IMR-90 (cell line): ENCODE measurements at regions of chr17 and their contacts with region 1.

Region 1: DNA sequence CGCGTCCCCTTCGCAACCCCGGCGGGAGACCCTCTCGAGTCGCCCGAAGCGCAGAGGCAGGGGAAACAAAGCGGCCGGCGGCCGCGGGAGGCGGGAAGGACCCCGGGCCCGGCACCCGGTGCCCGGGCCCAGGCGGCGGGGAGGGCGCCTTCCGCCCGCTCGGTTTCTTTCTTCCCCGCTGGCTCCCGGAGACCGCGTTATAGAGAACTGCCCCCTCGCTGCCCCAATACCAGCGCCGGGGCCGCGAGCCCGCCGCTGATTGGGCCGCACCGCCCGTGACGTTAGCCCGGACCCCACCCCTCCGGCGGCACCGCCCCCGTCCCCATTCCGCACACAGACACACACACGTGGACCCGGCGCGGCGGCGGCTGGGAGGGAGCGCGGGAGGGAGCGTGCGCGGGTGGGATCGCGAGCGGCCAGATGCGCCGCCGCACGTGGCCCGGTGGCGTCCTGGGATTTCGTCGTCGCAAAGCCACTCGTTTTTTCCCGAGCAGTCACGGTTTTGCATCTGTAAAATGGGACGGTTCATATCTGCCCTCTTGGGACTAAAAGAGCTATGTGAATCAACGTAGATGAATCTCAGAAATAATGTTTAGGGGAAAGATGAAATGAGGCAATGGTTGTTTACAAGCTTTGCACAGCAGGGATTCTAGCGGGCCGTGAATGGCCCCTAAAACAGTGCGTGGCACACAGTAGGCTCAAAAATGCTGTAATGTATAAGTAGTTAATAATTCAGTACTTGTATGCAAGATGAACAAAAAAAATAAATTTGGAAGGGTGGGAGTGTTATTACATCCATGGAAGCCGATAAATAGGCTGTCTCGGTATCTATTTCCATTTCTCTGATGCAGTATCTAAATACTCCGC is at the start of gene EPOP:
- DNase-seq: peak; percentile 76
- ATAC-seq: peak; percentile 93
- H3K4me3 ChIP-seq: peak within 1 kb of the TSS; percentile 52
- H3K27ac ChIP-seq: no peak within 1 kb of the TSS
- H3K4me1 ChIP-seq: no peaks in the 10 kb centered on the region
- H3K27me3 ChIP-seq: peaks cover 45% of the 10 kb centered on the region
- CTCF ChIP-seq: no peak
- POLR2A ChIP-seq: 0 out of 2 replicates have a peak, but pooled peaks have one; percentile 55
- RAD21 ChIP-seq: no peak
- total RNA-seq, gene EPOP: 0.28 and 0.36 TPM in 2 replicates

Region 2: DNA sequence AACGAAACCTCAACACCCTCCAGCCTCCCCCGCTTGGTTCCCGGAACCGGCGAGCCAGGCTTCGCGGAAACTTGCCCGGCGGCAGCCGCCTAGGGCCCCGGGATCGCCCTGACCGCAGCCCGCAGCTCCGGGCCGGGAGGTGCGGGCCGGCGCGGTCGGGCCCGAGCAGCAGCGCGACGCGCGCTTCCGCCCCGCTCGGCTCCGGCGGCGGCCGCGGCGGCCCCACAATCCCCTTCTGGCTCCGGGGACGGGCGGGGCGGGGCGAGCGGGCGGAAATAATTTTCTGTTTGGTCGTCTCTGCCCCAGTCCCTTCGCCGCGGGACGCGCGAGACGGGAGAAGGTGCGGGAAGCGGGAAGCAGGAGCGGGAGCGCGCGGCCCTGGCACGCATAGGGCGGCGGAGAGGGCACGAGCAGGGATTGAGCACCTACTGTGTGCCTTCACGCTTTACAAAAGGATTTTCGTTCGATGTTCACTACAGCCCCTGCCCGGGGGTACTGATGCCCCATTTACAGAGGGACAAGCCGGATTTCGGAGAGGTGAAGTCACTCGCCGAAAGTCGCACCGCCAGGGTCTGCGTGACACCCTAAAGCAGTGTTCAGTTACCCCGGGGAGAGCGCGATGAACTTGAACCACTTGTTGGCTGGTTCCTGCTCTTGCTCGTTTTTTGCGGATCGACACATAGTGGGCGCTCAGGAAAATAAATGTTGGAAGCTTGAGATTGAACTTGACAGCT is 27.4 kb after region 1 on chr17:
- CTCF ChIA-PET with region 1: interaction called, 3 read pairs
- POLR2A ChIA-PET with region 1: interaction called, 3 read pairs
- dilution Hi-C with region 1: no loop called
- in situ Hi-C with region 1: no loop called
- intact Hi-C with region 1: loop called (anchors 1 kb)
- DNase-seq: peak; percentile 81
- ATAC-seq: peak; percentile 72
- H3K4me3 ChIP-seq: peak overlapping the region; percentile 95
- H3K27ac ChIP-seq: peak overlapping the region; percentile 83
- H3K4me1 ChIP-seq: peaks cover 17% of the 10 kb centered on the region
- H3K27me3 ChIP-seq: no peaks in the 10 kb centered on the region
- CTCF ChIP-seq: no peak
- POLR2A ChIP-seq: 0 out of 2 replicates have a peak, but pooled peaks have one; percentile 28
- RAD21 ChIP-seq: no peak

Region 3: GRCh38 chr17:38729886-38730525 is 55.0 kb after region 1 on chr17 and contains the start of gene CISD3:
- CTCF ChIA-PET with region 1: interaction called, 8 read pairs
- POLR2A ChIA-PET with region 1: no interaction called
- dilution Hi-C with region 1: no loop called
- in situ Hi-C with region 1: loop called (anchors 5 kb)
- intact Hi-C with region 1: loop called (anchors 2 kb)
- DNase-seq: peak; percentile 76
- ATAC-seq: peak; percentile 96
- H3K4me3 ChIP-seq: peak within 1 kb of the TSS; percentile 86
- H3K27ac ChIP-seq: peak within 1 kb of the TSS; percentile 87
- H3K4me1 ChIP-seq: peaks cover 12% of the 10 kb centered on the region
- H3K27me3 ChIP-seq: no peaks in the 10 kb centered on the region
- CTCF ChIP-seq: peak; percentile 82
- POLR2A ChIP-seq: no peak
- RAD21 ChIP-seq: peak; percentile 39
- total RNA-seq, gene CISD3: 1.3 and 1.4 TPM in 2 replicates

Region 4: GRCh38 chr17:38735161-38735997 is 60.4 kb after region 1 on chr17:
- CTCF ChIA-PET with region 1: interaction called, 8 read pairs
- POLR2A ChIA-PET with region 1: no interaction called
- dilution Hi-C with region 1: no loop called
- in situ Hi-C with region 1: loop called (anchors 5 kb)
- intact Hi-C with region 1: loop called (anchors 2 kb)
- DNase-seq: no peak
- ATAC-seq: peak; percentile 48
- H3K4me3 ChIP-seq: no peak overlapping the region
- H3K27ac ChIP-seq: no peak overlapping the region
- H3K4me1 ChIP-seq: peaks cover 13% of the 10 kb centered on the region
- H3K27me3 ChIP-seq: no peaks in the 10 kb centered on the region
- CTCF ChIP-seq: peak; percentile 76
- POLR2A ChIP-seq: no peak
- RAD21 ChIP-seq: peak; percentile 74

Region 5: GRCh38 chr17:38752119-38752929 is 77.3 kb after region 1 on chr17 and contains the start of gene PSMB3:
- CTCF ChIA-PET with region 1: no interaction called
- POLR2A ChIA-PET with region 1: no interaction called
- dilution Hi-C with region 1: no loop called
- in situ Hi-C with region 1: no loop called
- intact Hi-C with region 1: loop called (anchors 1 kb)
- DNase-seq: peak; percentile 100
- ATAC-seq: peak; percentile 80
- H3K4me3 ChIP-seq: peak within 1 kb of the TSS; percentile 84
- H3K27ac ChIP-seq: peak within 1 kb of the TSS; percentile 90
- H3K4me1 ChIP-seq: peaks cover 1% of the 10 kb centered on the region; the same call in 1 of the 2 replicates
- H3K27me3 ChIP-seq: no peaks in the 10 kb centered on the region
- CTCF ChIP-seq: no peak
- POLR2A ChIP-seq: peak; percentile 35; the same call in 1 of the 2 replicates
- RAD21 ChIP-seq: no peak
- total RNA-seq, gene PSMB3: 510 and 828 TPM in 2 replicates